ENCODE measurements at regions of chr5 and their contacts with region 1.

Region 1: GRCh38 chr5:40904205-40904993 is 4.9 kb upstream of the C7 start:
- DNase-seq: peak; percentile 75
- H3K4me3 Mint-ChIP-seq: no peak overlapping the region
- H3K27ac Mint-ChIP-seq: no peak overlapping the region
- H3K4me1 Mint-ChIP-seq: peaks cover 7% of the 10 kb centered on the region
- H3K27me3 Mint-ChIP-seq: no peaks in the 10 kb centered on the region
- CTCF ChIP-seq: peak; percentile 88

Region 2: DNA sequence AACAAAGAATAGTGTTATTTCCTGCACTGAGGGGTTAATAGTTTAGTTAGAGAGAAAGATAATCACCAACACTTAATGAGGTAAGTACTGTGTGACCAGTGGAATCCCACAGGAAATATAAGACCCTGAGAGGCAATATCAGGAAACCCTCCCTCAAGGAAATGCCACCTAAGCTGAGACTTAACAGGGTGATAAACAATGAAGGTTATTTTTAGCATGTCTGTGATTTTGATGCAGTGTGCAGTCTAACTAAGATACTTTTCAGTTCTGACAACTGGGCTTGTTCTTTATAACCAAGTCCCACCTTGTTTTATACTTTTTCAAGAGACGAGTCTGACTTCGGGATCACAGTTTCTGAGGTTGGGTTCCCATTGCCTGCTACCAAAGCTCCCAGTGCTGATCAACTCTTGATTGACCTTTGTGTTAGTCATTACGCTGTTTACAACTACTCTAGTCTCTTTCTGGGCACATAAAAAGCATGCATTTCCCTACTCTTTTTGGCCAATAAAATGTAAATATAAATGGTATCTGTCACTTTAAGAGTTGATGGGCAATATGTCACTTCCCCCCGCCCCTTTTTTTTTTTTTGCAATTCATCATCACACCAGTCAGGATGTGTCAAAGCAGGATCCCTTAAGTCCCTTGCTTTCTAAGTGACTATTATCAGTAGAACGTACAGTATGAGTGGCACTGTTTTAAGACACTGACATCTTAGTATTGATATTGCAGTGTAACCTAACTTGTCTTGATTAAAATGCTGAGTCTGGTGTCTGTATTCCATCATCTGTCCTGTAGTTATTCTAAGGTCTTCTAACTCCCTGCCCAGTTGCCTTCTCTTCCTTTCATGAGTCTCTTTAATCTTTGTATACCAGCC is 277.5 kb after region 1 on chr5:
- CTCF ChIA-PET with region 1: interaction called, 6 read pairs
- intact Hi-C with region 1: loop called (anchors 5 kb)
- DNase-seq: no peak
- H3K4me3 Mint-ChIP-seq: peak overlapping the region; percentile 45
- H3K27ac Mint-ChIP-seq: peak overlapping the region; percentile 43
- H3K4me1 Mint-ChIP-seq: peaks cover 26% of the 10 kb centered on the region
- H3K27me3 Mint-ChIP-seq: no peaks in the 10 kb centered on the region
- CTCF ChIP-seq: no peak

Region 3: DNA sequence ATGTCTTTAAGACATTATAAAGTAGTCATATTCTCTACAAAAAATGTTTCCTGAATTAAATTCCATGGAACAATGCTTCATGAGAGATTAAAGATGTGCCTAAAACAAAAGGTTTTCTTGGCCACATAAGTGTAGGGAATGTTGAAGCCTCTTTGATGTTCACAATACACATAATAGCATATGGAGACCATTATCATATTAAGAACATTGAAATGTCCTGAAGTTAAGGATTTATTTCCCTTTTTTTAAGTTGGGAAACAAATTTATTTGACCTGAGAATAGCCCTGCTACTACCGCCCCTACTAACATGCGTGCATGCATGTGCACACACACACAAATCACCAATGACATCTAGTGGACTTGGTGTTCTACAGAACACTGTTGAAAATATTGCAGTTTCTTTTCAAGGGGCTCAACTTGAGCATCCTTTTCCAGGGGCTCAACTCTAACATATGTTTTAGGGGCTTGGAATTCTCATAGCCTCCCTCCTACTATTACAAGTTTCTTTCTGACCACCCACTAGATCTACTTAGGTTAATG is 433.8 kb after region 1 on chr5:
- CTCF ChIA-PET with region 1: no interaction called
- intact Hi-C with region 1: loop called (anchors 1 kb)
- DNase-seq: no peak
- H3K4me3 Mint-ChIP-seq: no peak overlapping the region
- H3K27ac Mint-ChIP-seq: no peak overlapping the region
- H3K4me1 Mint-ChIP-seq: no peaks in the 10 kb centered on the region
- H3K27me3 Mint-ChIP-seq: peaks cover 14% of the 10 kb centered on the region
- CTCF ChIP-seq: no peak

Region 4: DNA sequence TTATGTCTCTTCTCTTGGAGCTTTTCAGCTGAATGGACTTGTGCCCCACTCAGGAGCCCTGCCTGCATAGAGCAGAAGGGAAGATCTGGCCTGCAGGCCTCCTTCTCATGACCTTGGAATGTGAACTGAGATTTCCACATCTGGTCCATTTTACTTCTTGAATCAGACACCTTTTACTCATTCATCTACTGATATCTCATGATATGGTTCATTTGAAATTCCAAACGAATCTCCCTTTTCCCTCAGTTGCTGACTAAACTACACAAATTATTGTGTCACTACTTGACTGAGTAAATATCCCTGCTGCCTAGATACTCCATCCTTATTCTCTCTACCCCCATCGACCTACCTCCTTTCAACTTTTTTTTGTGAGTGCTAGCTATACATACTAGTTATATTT is 467.3 kb after region 1 on chr5:
- CTCF ChIA-PET with region 1: no interaction called
- intact Hi-C with region 1: no loop called
- DNase-seq: no peak
- H3K4me3 Mint-ChIP-seq: no peak overlapping the region
- H3K27ac Mint-ChIP-seq: no peak overlapping the region
- H3K4me1 Mint-ChIP-seq: no peaks in the 10 kb centered on the region
- H3K27me3 Mint-ChIP-seq: peaks cover 11% of the 10 kb centered on the region
- CTCF ChIP-seq: no peak

Region 5: GRCh38 chr5:41524174-41524573 is 619.8 kb after region 1 on chr5:
- CTCF ChIA-PET with region 1: no interaction called
- intact Hi-C with region 1: loop called (anchors 2 kb)
- DNase-seq: no peak
- H3K4me3 Mint-ChIP-seq: no peak overlapping the region
- H3K27ac Mint-ChIP-seq: no peak overlapping the region
- H3K4me1 Mint-ChIP-seq: peaks cover 12% of the 10 kb centered on the region
- H3K27me3 Mint-ChIP-seq: no peaks in the 10 kb centered on the region
- CTCF ChIP-seq: no peak

Region 6: GRCh38 chr5:41843456-41844370 is 939.3 kb after region 1 on chr5:
- CTCF ChIA-PET with region 1: interaction called, 4 read pairs
- intact Hi-C with region 1: loop called (anchors 1 kb)
- DNase-seq: peak; percentile 59
- H3K4me3 Mint-ChIP-seq: no peak overlapping the region
- H3K27ac Mint-ChIP-seq: no peak overlapping the region
- H3K4me1 Mint-ChIP-seq: peaks cover 13% of the 10 kb centered on the region
- H3K27me3 Mint-ChIP-seq: no peaks in the 10 kb centered on the region
- CTCF ChIP-seq: peak; percentile 76